ENCODE measurements at regions of chr11 and their contacts with region 1.

Region 1: GRCh38 chr11:121722431-121723245 is 269.9 kb upstream of the SORL1-AS1 start:
- DNase-seq: peak; percentile 37 to 96 (median 93)
- H3K4me3 ChIP-seq: peak overlapping the region; percentile 46 to 94 (median 66)
- H3K27ac ChIP-seq: peak overlapping the region; percentile 86 to 100 (median 99)
- H3K27me3 ChIP-seq: no peaks in the 10 kb centered on the region
- CTCF ChIP-seq: peak in 19 of 56 donors; percentile 6 to 42 (median 10)

Region 2: GRCh38 chr11:121671283-121672168 is 51.1 kb before region 1 on chr11:
- intact Hi-C with region 1: loop called in 1 of 2 experiments (anchors 2 kb)
- DNase-seq: peak in 2 of 10 donors; percentile 45 to 55
- H3K4me3 ChIP-seq: peak overlapping the region in 53 of 59 donors; percentile 3 to 59 (median 29)
- H3K27ac ChIP-seq: peak overlapping the region; percentile 51 to 95 (median 85)
- H3K27me3 ChIP-seq: no peaks in the 10 kb centered on the region
- CTCF ChIP-seq: no peak

Region 3: DNA sequence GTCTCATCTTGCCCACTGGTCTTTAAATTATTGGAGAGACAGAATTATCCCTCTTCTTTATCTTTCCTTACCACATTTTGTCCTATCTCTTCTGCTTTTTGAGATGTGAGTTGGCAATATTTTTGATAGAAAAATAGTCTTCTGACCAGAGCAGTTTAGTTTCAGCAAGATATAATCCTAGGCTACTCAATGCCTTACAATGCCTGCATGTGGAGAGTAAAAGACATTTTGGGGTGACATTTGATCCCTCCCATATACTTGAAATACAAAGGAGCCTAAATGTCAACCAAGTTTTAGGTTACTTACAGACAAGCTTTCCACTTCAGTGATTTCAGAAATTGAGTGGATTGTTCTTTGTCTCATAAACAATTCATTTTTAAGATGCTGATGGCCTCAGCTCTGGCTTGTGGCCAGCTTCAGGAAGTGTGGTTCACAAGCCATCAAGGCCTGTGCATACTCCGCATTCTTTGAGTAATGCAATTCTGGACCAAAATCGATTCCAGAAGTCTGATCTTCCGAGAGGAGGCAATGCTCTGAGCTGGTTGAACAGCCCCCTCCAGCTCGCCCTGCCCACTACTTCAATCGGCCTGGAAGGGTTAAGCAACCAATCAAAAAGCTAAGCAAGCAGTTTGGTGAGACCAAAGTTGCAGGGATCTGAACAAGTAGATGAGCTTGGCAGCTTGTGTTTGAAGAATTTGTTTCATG is 119.0 kb after region 1 on chr11:
- intact Hi-C with region 1: loop called in 1 of 2 experiments (anchors 10 kb)
- DNase-seq: no peak
- H3K4me3 ChIP-seq: no peak overlapping the region
- H3K27ac ChIP-seq: no peak overlapping the region
- H3K27me3 ChIP-seq: no peaks in the 10 kb centered on the region
- CTCF ChIP-seq: no peak

Region 4: DNA sequence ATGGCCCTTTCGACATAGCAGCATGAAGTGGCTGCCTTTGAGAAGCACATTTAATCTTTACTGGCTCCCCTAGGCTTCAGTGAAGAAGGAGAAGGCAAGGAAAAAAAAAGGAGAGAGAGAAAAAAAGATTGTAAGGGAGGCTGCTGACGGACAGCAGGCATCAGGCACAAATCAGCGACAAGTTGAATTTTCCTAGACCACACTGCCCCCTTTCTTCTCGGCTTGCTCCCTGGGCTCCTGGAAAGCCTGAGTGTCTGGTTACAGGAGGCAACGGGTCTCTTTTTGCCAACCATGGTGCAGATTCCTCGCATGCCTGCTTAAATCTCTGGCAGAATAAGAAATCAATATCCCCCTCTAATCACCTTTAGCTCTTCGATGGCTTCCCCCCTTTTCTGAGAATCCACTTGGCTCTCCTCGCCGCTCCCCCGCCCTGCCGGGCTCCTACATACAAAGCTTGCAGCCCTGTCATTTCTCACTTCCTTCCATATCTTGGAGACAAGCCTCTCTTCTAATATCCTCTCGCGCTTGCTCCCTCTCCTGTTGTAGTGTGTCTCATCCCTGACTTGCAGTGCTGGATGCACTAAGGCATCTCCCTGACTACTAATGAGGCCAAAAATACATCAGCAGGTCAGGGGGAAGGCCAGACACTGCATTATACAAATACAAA is 379.1 kb after region 1 on chr11:
- intact Hi-C with region 1: loop called (anchors 1 to 2 kb)
- DNase-seq: peak; percentile 45 to 90 (median 81)
- H3K4me3 ChIP-seq: peak overlapping the region; percentile 58 to 91 (median 76)
- H3K27ac ChIP-seq: peak overlapping the region; percentile 91 to 99 (median 98)
- H3K27me3 ChIP-seq: no peaks in the 10 kb centered on the region
- CTCF ChIP-seq: peak; percentile 70 to 95 (median 85)

Region 5: GRCh38 chr11:122215244-122215992 is 492.8 kb after region 1 on chr11:
- intact Hi-C with region 1: loop called in 1 of 2 experiments (anchors 2 kb)
- DNase-seq: peak; percentile 32 to 87 (median 76)
- H3K4me3 ChIP-seq: no peak overlapping the region
- H3K27ac ChIP-seq: peak overlapping the region; percentile 21 to 99 (median 96)
- H3K27me3 ChIP-seq: no peaks in the 10 kb centered on the region
- CTCF ChIP-seq: peak; percentile 44 to 97 (median 89)

Measured in dorsolateral prefrontal cortex (tissue), 120 donors.